Colonic mucosa (tissue), 4 donors: ENCODE measurements at regions of chr20 and their contacts with region 1.

Region 1: GRCh38 chr20:45823949-45824835 is 2.9 kb downstream of the TNNC2 start:
- DNase-seq: peak; percentile 63
- H3K4me3 ChIP-seq: peak overlapping the region; percentile 23
- H3K27ac ChIP-seq: no peak overlapping the region
- H3K4me1 ChIP-seq: peaks cover 9% of the 10 kb centered on the region
- H3K27me3 ChIP-seq: no peaks in the 10 kb centered on the region
- CTCF ChIP-seq: peak; percentile 42

Region 2: DNA sequence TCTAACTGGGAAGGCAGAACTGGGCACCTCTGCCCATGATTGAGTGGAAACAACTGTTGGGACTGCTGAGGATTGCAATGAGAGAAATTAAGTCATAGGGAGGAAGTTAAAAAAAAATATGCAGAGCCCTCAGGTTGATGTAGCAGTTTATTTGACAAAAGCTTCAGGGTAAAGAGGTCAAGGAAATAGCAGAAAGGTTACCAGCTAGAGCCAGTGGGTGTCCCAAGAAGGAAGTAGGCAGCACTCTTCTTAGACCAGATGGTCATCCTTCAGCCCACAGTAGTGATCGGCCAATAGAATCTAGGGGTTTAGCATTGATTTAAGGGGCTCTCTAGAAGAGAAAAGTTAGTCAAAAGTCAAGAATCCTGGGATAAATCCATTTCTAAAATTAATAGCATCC is 216.4 kb before region 1 on chr20:
- intact Hi-C with region 1: no loop called
- DNase-seq: no peak
- H3K4me3 ChIP-seq: no peak overlapping the region
- H3K27ac ChIP-seq: no peak overlapping the region
- H3K4me1 ChIP-seq: no peaks in the 10 kb centered on the region
- H3K27me3 ChIP-seq: no peaks in the 10 kb centered on the region
- CTCF ChIP-seq: no peak

Region 3: GRCh38 chr20:45880988-45881788 is 57.0 kb after region 1 on chr20 and contains the start of gene ZSWIM1:
- intact Hi-C with region 1: loop called (anchors 10 kb)
- DNase-seq: peak; percentile 100
- H3K4me3 ChIP-seq: peak within 1 kb of the TSS; percentile 51
- H3K27ac ChIP-seq: peak within 1 kb of the TSS; percentile 46
- H3K4me1 ChIP-seq: no peaks in the 10 kb centered on the region
- H3K27me3 ChIP-seq: no peaks in the 10 kb centered on the region
- CTCF ChIP-seq: no peak
- total RNA-seq, gene ZSWIM1: 13.3 to 13.4 TPM

Region 4: GRCh38 chr20:45963059-45964005 is 139.1 kb after region 1 on chr20:
- intact Hi-C with region 1: loop called (anchors 2 kb)
- DNase-seq: no peak
- H3K4me3 ChIP-seq: no peak overlapping the region
- H3K27ac ChIP-seq: no peak overlapping the region
- H3K4me1 ChIP-seq: no peaks in the 10 kb centered on the region
- H3K27me3 ChIP-seq: no peaks in the 10 kb centered on the region
- CTCF ChIP-seq: peak; percentile 35